Activated naive CD4-positive, alpha-beta T cell treated with anti-CD3 and anti-CD28 coated beads for 36 hours (primary cell): ENCODE measurements at regions of chr2 and their contacts with region 1.

Region 1: DNA sequence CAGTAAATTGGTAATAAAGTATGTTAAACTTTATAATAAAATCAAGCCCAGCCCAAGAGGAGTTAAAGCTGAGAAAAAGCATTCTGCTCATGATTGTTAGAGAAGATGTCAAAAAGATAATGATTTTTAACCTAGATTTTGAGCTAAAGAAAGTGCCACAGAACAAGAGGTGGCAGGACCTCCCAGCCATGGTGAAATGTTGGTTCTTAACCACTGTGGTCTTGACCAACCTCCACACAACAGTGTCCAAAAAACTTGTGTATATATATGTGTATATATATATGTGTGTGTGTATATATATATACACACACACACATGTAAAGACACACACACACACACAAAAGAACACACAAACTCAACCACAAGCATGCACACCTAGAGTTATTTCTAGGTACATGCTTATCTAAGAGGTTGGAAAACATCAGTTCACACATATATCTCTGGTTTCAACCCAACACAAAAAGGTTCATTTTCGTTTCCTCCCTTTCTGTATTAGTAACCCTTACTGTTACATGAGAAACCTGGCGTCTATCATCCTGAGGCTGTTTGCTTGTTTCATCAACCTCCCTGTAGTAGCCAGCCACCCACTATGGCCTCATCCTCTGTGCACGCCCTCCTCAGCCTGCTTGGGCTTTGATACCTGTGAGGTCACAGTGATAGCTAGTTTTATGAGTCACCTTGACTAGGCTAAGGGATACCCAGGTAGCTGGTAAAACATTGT is 631.8 kb upstream of the ID2 start:
- DNase-seq: peak; percentile 80
- H3K4me3 Mint-ChIP-seq: no peak overlapping the region
- H3K27ac Mint-ChIP-seq: peak overlapping the region; percentile 68
- H3K4me1 Mint-ChIP-seq: peaks cover 18% of the 10 kb centered on the region
- H3K27me3 Mint-ChIP-seq: peaks cover 2% of the 10 kb centered on the region

Region 2: DNA sequence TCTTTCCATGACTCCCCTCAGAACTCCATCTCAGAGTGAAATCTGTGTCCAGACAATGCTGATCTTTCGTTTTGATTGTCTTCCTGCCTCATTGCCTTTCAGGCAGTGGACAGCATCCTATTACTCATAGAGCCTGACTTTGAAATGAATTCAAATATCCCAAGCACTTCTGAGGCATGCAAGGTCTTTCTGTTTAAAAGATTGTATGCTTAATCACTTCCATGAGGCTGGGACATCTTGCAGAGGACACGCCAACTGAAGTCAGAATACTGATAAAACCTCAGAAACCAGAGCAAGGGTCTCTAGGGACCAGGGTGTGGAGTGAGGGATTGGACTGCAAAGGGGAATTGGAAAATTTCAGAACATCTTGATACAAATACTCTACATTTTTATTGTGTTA is 204.7 kb before region 1 on chr2:
- CTCF ChIA-PET with region 1: no interaction called
- intact Hi-C with region 1: loop called (anchors 1 kb)
- DNase-seq: no peak
- H3K4me3 Mint-ChIP-seq: no peak overlapping the region
- H3K27ac Mint-ChIP-seq: no peak overlapping the region
- H3K4me1 Mint-ChIP-seq: peaks cover 19% of the 10 kb centered on the region
- H3K27me3 Mint-ChIP-seq: peaks cover 5% of the 10 kb centered on the region

Region 3: DNA sequence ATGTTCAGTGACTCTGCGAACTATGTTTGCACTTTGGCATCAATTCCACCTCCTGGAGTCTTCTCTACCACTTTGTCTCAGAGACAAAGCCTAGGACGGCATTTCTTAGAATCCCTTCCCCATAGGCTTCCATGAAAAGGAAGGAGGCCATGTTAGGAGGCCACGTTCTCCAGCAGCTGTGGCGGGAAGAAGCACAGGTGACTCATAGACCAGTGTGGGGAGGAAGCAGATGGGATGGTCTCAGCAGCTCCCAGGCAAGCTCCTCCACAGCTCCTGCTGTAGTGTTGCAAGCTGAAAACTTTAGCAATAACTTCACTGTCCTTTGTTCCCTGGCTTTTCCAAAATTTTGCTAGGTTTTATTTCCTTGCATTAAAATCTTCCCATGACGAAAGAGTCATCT is 149.4 kb before region 1 on chr2:
- CTCF ChIA-PET with region 1: no interaction called
- intact Hi-C with region 1: no loop called
- DNase-seq: no peak
- H3K4me3 Mint-ChIP-seq: no peak overlapping the region
- H3K27ac Mint-ChIP-seq: no peak overlapping the region
- H3K4me1 Mint-ChIP-seq: peaks cover 11% of the 10 kb centered on the region
- H3K27me3 Mint-ChIP-seq: peaks cover 4% of the 10 kb centered on the region

Region 4: GRCh38 chr2:7930800-7931635 is 119.0 kb before region 1 on chr2:
- CTCF ChIA-PET with region 1: no interaction called
- intact Hi-C with region 1: loop called (anchors 5 kb)
- DNase-seq: peak; percentile 45
- H3K4me3 Mint-ChIP-seq: no peak overlapping the region
- H3K27ac Mint-ChIP-seq: peak overlapping the region; percentile 74
- H3K4me1 Mint-ChIP-seq: peaks cover 19% of the 10 kb centered on the region
- H3K27me3 Mint-ChIP-seq: no peaks in the 10 kb centered on the region

Region 5: GRCh38 chr2:7984693-7985353 is 65.2 kb before region 1 on chr2:
- CTCF ChIA-PET with region 1: no interaction called
- intact Hi-C with region 1: loop called (anchors 2 kb)
- DNase-seq: peak; percentile 22
- H3K4me3 Mint-ChIP-seq: peak overlapping the region; percentile 8
- H3K27ac Mint-ChIP-seq: peak overlapping the region; percentile 62
- H3K4me1 Mint-ChIP-seq: peaks cover 20% of the 10 kb centered on the region
- H3K27me3 Mint-ChIP-seq: peaks cover 4% of the 10 kb centered on the region

Region 6: GRCh38 chr2:8154936-8155335 is 104.9 kb after region 1 on chr2:
- CTCF ChIA-PET with region 1: no interaction called
- intact Hi-C with region 1: loop called (anchors 1 kb)
- DNase-seq: peak; percentile 68
- H3K4me3 Mint-ChIP-seq: no peak overlapping the region
- H3K27ac Mint-ChIP-seq: peak overlapping the region; percentile 78
- H3K4me1 Mint-ChIP-seq: peaks cover 16% of the 10 kb centered on the region
- H3K27me3 Mint-ChIP-seq: no peaks in the 10 kb centered on the region

Region 7: DNA sequence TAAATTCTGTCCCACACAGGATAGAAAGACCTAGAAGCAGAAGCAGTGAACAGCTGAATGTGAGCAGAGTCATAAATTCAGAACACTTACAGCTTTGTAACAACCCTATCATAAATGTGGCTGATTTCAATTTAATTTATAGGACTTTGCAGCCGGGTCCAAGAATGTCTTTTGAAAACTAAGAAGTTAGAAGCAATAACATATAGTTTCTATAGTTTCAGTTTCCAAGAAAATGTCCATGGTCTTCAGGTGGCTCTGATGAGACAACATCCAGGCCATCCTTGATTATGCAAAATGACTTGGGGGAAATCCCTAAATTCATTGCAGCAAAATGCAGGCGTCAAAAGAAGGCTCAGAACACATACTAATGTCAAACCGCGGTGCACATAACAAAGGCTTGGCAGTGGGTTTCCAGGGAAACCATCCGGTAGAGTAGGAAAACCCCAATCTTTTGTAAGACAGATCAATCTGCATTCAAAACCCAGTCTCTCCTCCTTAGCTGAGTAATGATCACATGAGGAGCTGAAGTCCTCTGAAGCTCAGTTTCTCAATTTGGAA is 189.6 kb after region 1 on chr2:
- CTCF ChIA-PET with region 1: no interaction called
- intact Hi-C with region 1: loop called (anchors 1 kb)
- DNase-seq: peak; percentile 75
- H3K4me3 Mint-ChIP-seq: no peak overlapping the region
- H3K27ac Mint-ChIP-seq: no peak overlapping the region
- H3K4me1 Mint-ChIP-seq: peaks cover 18% of the 10 kb centered on the region
- H3K27me3 Mint-ChIP-seq: peaks cover 22% of the 10 kb centered on the region

Region 8: GRCh38 chr2:8303322-8303832 is 253.4 kb after region 1 on chr2:
- CTCF ChIA-PET with region 1: no interaction called
- intact Hi-C with region 1: loop called (anchors 5 kb)
- DNase-seq: peak; percentile 69
- H3K4me3 Mint-ChIP-seq: no peak overlapping the region
- H3K27ac Mint-ChIP-seq: no peak overlapping the region
- H3K4me1 Mint-ChIP-seq: peaks cover 39% of the 10 kb centered on the region
- H3K27me3 Mint-ChIP-seq: peaks cover 5% of the 10 kb centered on the region